T-cell (primary cell): ENCODE measurements at regions of chr10 and their contacts with region 1.

Region 1: GRCh38 chr10:50908366-50908765 is 22.9 kb upstream of the A1CF start:
- DNase-seq: no peak
- ATAC-seq: no peak
- H3K4me3 ChIP-seq: no peak overlapping the region
- H3K4me3 Mint-ChIP-seq: no peak overlapping the region
- H3K27ac ChIP-seq: no peak overlapping the region
- H3K27ac Mint-ChIP-seq: no peak overlapping the region
- H3K4me1 ChIP-seq: no peaks in the 10 kb centered on the region
- H3K4me1 Mint-ChIP-seq: no peaks in the 10 kb centered on the region
- H3K27me3 ChIP-seq: no peaks in the 10 kb centered on the region
- H3K27me3 Mint-ChIP-seq: peaks cover 0 to 3% of the 10 kb centered on the region in 2 donors

Region 2: DNA sequence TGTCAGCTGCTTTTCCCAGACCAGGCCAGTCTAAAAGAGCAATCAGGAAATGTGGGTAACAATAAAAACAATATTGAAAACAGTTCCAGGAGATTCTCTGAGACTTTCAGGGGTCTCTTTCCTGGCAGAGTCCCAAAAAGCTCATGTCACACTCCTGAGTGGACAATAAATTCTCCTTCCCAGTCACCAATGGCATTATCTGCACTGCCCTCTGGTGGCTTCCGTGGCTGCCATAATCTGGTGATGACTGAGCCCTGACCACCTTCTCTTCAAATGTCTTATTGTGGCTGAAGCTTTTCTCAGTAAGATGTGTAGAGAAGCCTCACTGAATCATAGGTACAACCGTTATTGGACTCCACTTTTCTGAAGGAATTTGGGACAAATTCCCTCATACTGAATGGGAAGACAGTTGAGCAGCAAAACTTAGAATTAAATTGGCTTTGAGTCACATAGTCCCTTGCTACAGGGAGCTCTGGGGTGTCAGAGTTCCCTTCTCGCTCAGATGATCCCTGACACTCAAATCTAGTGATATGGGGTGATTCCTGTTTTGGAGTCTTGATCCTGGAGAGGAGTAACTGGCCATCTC is 632.6 kb before region 1 on chr10:
- CTCF ChIA-PET with region 1: interaction called in 1 of 2 experiments, 11 read pairs
- POLR2A ChIA-PET with region 1: no interaction called
- DNase-seq: peak in 17 of 35 experiments; percentile 3 to 33 (median 13)
- ATAC-seq: peak in 2 of 4 experiments; percentile 37 to 53
- H3K4me3 ChIP-seq: no peak overlapping the region
- H3K4me3 Mint-ChIP-seq: no peak overlapping the region
- H3K27ac ChIP-seq: no peak overlapping the region
- H3K27ac Mint-ChIP-seq: no peak overlapping the region
- H3K4me1 ChIP-seq: no peaks in the 10 kb centered on the region
- H3K4me1 Mint-ChIP-seq: no peaks in the 10 kb centered on the region
- H3K27me3 ChIP-seq: peaks cover 4 to 9% of the 10 kb centered on the region in 2 experiments
- H3K27me3 Mint-ChIP-seq: peaks cover 14 to 25% of the 10 kb centered on the region in 2 donors